SK-N-SH (cell line): ENCODE measurements at regions of chr18 and their contacts with region 1.

Region 1: DNA sequence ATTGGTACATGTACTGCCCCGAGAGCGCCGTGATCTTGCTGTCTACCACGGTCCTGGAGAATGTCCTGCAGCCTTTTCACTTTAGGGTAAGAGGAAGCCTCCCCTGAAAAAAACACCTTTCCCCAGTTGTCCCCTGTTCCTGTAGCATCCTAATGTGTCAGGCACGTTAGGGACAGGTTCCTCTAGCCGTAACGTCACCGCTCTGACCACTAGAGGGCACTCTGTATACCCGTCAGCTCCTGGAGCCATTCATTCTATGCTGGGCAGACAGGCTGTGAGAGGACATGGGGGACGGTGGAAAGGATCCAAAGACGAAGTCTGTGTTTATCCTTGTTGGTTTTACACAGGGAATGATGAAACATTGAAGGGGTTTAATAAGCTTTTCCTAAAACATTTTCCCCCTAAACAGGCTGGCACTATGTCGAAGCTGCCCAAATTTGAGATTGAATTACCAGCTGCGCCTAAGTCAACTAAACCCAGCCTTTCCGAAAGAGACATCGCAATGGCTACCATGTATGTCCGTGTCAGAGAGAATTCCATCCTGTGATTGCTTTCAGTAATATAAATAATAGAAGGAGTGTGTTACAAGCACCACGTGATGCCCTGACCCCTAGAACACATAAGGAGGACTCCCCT is 12.7 kb downstream of the RMC1 start:
- DNase-seq: peak; percentile 81
- H3K4me3 ChIP-seq: no peak overlapping the region
- H3K27ac ChIP-seq: no peak overlapping the region
- H3K4me1 ChIP-seq: no peaks in the 10 kb centered on the region
- H3K27me3 ChIP-seq: no peaks in the 10 kb centered on the region
- CTCF ChIP-seq: peak; percentile 93
- EP300 ChIP-seq: no peak
- RAD21 ChIP-seq: peak; percentile 79

Region 2: DNA sequence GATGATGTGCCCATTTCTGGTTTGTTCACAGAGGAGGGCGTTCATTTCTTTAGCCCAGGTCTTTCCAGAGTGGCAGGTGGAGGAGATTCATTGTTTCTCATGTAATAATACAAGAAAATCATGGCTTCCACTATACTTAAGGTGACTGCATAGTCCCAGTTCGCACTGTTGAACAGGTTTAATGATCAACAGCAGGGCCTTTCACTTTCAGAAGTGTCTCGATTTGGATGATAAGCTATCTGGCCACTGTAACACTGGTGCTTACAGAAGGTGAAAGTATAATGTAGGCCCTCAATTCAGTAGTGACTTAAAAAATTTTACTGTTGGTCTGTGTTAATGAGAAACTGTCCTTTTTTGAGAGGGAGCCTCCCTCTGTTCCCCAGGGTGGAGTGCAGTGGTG is 11.3 kb before region 1 on chr18:
- CTCF ChIA-PET with region 1: interaction called, 20 read pairs
- POLR2A ChIA-PET with region 1: no interaction called
- DNase-seq: no peak
- H3K4me3 ChIP-seq: peak overlapping the region in 1 of 2 experiments; percentile 96; a peak in 3 of 4 replicates
- H3K27ac ChIP-seq: no peak overlapping the region
- H3K4me1 ChIP-seq: peaks cover 8 to 20% of the 10 kb centered on the region in 2 experiments; a peak in 1 of 4 replicates
- H3K27me3 ChIP-seq: no peaks in the 10 kb centered on the region
- CTCF ChIP-seq: no peak
- EP300 ChIP-seq: no peak
- RAD21 ChIP-seq: no peak

Region 3: DNA sequence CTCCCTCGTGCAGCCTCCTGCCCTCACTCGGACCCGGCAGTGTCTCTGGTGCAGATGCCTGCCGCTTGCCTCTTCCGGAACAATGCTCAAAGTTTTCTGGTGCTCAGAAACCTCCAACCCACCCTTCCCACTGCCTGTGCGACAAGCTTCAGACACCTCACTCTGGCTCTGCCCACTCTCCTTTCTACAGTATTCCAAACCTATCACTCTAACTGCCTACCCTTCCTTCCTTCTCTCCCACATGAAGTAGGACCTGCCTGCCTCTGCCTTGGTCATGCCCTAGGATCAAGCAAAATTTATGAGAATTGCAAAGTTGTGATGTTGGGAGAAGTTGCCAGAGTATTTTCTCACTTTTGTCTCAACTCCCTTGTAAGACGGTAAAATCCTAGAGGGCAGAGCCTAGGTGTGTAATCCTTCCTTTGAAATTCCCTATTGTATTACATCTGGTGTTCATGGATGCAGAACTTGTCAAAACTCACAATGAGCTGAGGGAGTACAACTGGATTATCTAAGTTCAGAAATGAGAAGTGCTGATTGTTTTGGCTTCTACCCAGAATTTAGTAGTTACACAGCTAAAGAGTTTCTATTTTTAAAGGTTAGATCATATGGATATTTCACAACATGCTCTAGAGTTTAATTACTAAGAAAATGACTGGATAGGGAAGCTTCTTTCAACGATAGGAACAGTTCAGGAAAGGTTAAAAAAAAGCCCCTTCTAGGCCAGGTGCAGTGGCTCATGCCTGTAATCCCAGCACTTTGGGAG is 63.0 kb after region 1 on chr18:
- CTCF ChIA-PET with region 1: interaction called, 11 read pairs
- POLR2A ChIA-PET with region 1: no interaction called
- DNase-seq: no peak
- H3K4me3 ChIP-seq: no peak overlapping the region
- H3K27ac ChIP-seq: no peak overlapping the region; a peak in 1 of 4 replicates
- H3K4me1 ChIP-seq: peaks cover 0 to 11% of the 10 kb centered on the region in 2 experiments; a peak in 3 of 4 replicates
- H3K27me3 ChIP-seq: no peaks in the 10 kb centered on the region
- CTCF ChIP-seq: no peak
- EP300 ChIP-seq: no peak
- RAD21 ChIP-seq: no peak